Heart left ventricle (tissue), 16 donors: ENCODE measurements at regions of chr15 and their contacts with region 1.

Region 1: DNA sequence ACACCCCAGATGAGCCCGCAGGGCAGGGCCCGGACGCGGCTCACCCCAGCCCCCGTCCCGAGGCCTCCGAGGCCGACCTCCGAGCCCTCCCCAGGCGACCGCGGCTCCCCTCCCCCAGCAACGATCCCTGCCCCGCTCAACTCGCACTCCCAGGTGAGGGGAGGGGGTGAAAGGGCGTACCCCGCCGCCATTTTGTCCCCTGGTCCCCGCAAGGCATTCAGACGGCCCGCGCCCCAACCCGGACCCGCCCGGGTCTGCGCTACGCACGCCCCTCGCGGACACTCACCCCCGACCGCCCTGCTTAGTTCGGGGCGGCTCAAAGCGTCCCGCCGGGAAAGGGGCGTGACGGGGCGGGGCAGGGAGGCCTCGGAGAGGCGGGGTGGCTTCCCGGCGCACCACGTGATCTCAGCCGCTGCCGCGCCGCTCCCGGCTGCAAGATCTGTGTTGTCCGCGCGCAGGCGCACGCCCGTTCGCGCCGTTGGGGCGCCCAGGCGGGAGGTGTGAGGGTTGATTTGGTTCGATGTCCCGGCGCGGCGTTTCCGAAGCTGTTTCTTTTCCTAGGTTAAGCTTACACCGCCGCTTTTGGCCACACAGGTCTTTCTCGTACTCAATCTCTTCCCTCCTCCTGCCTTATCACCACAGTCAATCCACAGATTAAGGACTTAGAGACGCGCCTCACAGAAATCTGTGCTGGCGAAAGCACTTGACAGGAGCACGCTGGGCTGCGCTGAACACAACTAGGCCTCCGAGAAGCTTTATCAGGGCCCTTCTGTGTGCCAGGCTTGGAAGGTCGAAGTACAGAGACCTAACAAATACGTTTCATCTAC is at the start of gene SCAPER:
- DNase-seq: peak; percentile 94 to 97 (median 95)
- ATAC-seq: peak; percentile 92 to 98 (median 98)
- H3K4me3 ChIP-seq: peak within 1 kb of the TSS; percentile 67 to 98 (median 86)
- H3K27ac ChIP-seq: peak within 1 kb of the TSS; percentile 78 to 96 (median 91)
- H3K4me1 ChIP-seq: peaks cover 0 to 34% (median 23%) of the 10 kb centered on the region in 12 donors
- H3K27me3 ChIP-seq: no peaks in the 10 kb centered on the region
- CTCF ChIP-seq: peak in 5 of 12 donors; percentile 11 to 41 (median 24)
- POLR2A ChIP-seq: peak; percentile 16 to 79
- total RNA-seq, gene SCAPER: 27.7 to 53.9 (median 41.5) TPM

Region 2: GRCh38 chr15:76931397-76932007 is 26.3 kb after region 1 on chr15 and contains the start of gene RCN2:
- intact Hi-C with region 1: loop called in 1 of 10 experiments (anchors 2 kb)
- DNase-seq: peak; percentile 96 to 98 (median 97)
- ATAC-seq: peak; percentile 100
- H3K4me3 ChIP-seq: peak within 1 kb of the TSS; percentile 56 to 100 (median 78)
- H3K27ac ChIP-seq: peak within 1 kb of the TSS in 11 of 12 donors; percentile 72 to 91 (median 79)
- H3K4me1 ChIP-seq: peaks cover 0 to 19% (median 10%) of the 10 kb centered on the region in 12 donors
- H3K27me3 ChIP-seq: no peaks in the 10 kb centered on the region
- CTCF ChIP-seq: peak in 3 of 12 donors; percentile 18 to 23 (median 19)
- POLR2A ChIP-seq: peak; percentile 81 to 97
- total RNA-seq, gene RCN2: 22.2 to 32.9 (median 28.7) TPM